Aorta (tissue), 5 donors: ENCODE measurements at regions of chr11 and their contacts with region 1.

Region 1: GRCh38 chr11:75142714-75143419 is 8.0 kb upstream of the SLCO2B1 start:
- DNase-seq: peak; percentile 84 to 88
- ATAC-seq: peak; percentile 74
- H3K4me3 ChIP-seq: no peak overlapping the region
- H3K27ac ChIP-seq: no peak overlapping the region
- H3K4me1 ChIP-seq: no peaks in the 10 kb centered on the region
- H3K27me3 ChIP-seq: no peaks in the 10 kb centered on the region

Region 2: GRCh38 chr11:75195121-75195551 is 52.3 kb after region 1 on chr11:
- intact Hi-C with region 1: loop called in 1 of 2 experiments (anchors 5 kb)
- DNase-seq: peak; percentile 81 to 85
- ATAC-seq: peak; percentile 2
- H3K4me3 ChIP-seq: no peak overlapping the region
- H3K27ac ChIP-seq: no peak overlapping the region
- H3K4me1 ChIP-seq: no peaks in the 10 kb centered on the region
- H3K27me3 ChIP-seq: no peaks in the 10 kb centered on the region